Mammary epithelial cell (primary cell): ENCODE measurements at regions of chr18 and their contacts with region 1.

Region 1: DNA sequence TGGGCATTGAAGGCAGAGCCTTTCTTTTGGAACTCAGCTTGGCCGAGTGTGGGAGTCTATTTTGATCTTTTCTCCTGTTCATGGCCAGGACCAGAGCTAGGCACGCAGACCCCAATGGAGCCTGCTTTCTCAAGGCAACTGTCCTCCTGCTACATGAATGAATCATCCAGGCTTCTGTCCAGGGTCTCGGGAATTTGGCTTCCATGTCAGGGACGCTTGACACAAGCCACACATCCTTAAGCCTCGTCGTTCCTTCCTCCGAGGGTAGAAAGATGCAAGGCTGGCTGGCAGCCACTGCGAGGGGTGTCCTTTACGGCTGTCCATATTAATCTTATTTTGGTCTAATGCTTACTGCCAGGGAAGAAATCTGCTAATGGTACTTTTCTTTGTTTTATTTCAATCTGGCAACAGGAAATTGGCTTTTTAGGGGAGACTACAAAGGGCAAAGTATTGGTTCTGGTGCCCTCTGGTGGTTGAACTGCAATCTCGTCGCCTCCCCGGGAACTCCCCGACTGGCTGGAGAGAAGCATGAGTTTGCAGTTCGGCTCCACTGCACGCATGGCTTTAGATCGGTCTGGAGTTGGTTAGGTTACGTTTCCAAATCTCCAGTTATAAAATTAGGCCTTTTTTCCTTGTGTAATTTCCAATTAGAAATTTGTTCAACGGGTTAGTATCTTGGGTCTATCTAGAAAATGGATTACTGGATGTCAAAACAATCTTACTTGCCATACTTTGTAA is 135.2 kb downstream of the ALPK2 start:
- DNase-seq: peak; percentile 58
- H3K4me3 ChIP-seq: no peak overlapping the region
- H3K27ac ChIP-seq: no peak overlapping the region
- H3K4me1 ChIP-seq: peaks cover 8% of the 10 kb centered on the region
- H3K27me3 ChIP-seq: no peaks in the 10 kb centered on the region
- CTCF ChIP-seq: peak; percentile 79 to 91

Region 2: DNA sequence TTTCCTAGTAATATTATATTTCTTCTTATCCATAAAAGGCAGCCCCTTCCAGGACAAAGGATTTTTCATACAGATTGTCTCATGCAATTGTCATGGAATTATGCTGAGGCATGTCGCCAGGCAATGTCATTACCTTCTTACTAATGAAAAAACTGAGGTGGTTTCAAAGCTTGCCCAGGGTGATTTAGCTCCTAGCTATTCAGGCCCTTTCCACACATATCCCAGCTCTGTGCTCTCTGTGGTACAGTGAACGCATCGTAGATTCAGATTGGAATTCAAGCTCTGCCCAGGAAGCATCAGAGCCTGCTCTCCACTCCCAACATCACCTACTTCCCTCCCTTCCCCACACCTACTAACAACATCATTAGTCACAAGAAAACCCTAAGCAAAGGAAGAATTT is 750.7 kb before region 1 on chr18:
- CTCF ChIA-PET with region 1: no interaction called
- dilution Hi-C with region 1: no loop called
- in situ Hi-C with region 1: no loop called
- intact Hi-C with region 1: no loop called
- DNase-seq: peak; percentile 83
- H3K4me3 ChIP-seq: no peak overlapping the region
- H3K27ac ChIP-seq: peak overlapping the region; percentile 33
- H3K4me1 ChIP-seq: peaks cover 19% of the 10 kb centered on the region
- H3K27me3 ChIP-seq: no peaks in the 10 kb centered on the region
- CTCF ChIP-seq: no peak

Region 3: DNA sequence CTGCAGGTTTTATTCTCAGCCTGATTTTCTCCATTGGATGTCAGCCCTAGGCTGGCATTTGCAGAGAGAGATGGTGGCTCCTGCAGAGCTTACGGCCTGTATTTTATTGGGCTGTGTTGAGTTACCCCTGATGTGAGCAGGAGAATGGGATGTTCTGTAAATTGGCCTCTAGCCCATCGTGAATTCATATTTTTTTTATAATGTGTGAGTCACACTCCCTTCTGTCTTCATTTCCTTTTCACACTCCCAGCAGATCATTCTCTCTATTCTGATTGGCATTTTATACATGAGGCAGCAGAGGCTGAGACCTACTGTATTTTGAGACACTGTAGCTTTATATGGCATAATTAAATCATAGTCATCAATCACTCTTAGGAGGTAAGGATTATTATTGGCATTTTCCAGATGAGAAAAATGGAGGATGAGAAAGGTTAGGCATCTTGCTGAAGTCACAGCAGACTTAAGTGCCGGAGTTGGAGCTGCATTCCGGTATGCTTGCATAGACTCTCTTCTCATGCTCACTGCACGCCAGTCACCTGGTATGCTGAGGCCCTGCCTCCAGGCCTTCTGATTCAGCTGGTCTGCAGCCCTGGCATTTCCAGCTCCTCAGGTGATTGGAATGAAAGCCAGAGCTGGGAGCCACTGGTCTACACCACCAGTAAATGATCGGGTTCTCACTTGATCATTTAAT is 307.3 kb before region 1 on chr18:
- CTCF ChIA-PET with region 1: no interaction called
- dilution Hi-C with region 1: no loop called
- in situ Hi-C with region 1: no loop called
- intact Hi-C with region 1: loop called (anchors 5 kb)
- DNase-seq: peak; percentile 92
- H3K4me3 ChIP-seq: no peak overlapping the region
- H3K27ac ChIP-seq: peak overlapping the region; percentile 79
- H3K4me1 ChIP-seq: peaks cover 36% of the 10 kb centered on the region
- H3K27me3 ChIP-seq: no peaks in the 10 kb centered on the region
- CTCF ChIP-seq: no peak

Region 4: GRCh38 chr18:58402247-58402646 is 91.4 kb before region 1 on chr18:
- CTCF ChIA-PET with region 1: no interaction called
- dilution Hi-C with region 1: no loop called
- in situ Hi-C with region 1: loop called in 1 of 2 experiments (anchors 5 kb)
- intact Hi-C with region 1: loop called (anchors 1 kb)
- DNase-seq: peak; percentile 65
- H3K4me3 ChIP-seq: no peak overlapping the region
- H3K27ac ChIP-seq: no peak overlapping the region
- H3K4me1 ChIP-seq: peaks cover 8% of the 10 kb centered on the region
- H3K27me3 ChIP-seq: no peaks in the 10 kb centered on the region
- CTCF ChIP-seq: no peak

Region 5: DNA sequence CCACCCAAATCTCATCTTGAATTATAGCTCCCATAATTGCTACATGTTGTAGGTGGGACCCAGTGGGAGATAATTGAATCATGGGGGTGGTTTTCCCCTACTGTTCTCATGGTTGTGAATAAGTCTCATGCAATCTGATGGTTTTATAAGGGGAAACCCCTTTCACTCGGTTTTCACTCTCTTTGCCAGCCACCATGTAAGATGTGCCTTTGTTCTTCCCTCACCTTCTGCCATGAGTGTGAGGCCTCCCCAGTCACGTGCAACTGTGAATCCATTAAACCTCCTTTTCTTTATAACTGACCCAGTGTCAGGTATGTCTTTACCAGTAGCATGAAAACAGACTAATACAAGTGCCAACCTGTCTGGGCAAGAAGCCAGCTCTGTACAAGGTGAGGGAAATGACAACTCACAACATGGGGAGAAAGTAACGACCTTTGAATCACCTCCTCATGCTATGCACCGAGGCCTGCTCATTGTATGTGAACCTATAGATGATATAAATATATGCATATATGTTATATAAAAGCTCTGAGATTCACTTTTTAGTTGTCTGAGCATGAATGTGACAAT is 27.0 kb before region 1 on chr18:
- CTCF ChIA-PET with region 1: no interaction called
- dilution Hi-C with region 1: no loop called
- in situ Hi-C with region 1: no loop called
- intact Hi-C with region 1: no loop called
- DNase-seq: peak; percentile 80
- H3K4me3 ChIP-seq: no peak overlapping the region
- H3K27ac ChIP-seq: no peak overlapping the region
- H3K4me1 ChIP-seq: peaks cover 25% of the 10 kb centered on the region
- H3K27me3 ChIP-seq: no peaks in the 10 kb centered on the region
- CTCF ChIP-seq: no peak

Region 6: DNA sequence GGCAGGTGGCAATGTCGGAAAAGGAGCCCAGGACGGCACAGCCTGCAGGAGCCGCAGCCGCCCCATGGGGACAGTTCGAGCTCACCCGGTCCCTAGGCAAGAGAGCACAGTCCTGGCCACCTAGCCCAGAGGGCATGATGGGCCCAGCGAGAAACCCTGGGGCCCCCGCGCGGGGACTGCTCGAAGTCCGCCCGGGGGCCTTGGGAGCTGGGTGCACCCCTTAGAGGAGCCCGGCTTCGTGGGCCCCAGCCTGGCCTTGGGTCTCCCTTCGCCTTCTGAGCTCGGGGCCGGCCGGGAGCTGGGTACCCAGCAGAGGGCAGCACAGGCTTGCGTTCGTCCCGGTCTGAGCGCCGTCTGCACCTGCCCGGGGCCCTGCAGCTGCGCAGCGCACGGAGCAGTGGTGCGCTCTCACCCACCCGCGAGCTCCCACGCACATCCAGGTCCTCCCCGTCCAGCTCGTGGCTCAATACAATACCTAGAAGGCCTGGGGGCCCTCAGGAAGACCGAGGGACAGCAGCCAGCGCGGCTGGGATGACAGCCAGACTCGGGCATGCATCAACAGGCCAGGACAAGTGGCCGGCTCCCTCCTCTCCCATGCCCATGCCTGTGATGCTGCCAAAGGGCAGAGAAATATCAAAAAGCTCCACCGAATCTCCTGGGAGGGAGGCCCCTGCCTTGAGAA is 274.7 kb after region 1 on chr18:
- CTCF ChIA-PET with region 1: interaction called, 6 read pairs
- dilution Hi-C with region 1: no loop called
- in situ Hi-C with region 1: loop called in 1 of 2 experiments (anchors 10 kb)
- intact Hi-C with region 1: loop called (anchors 1 kb)
- DNase-seq: peak; percentile 84
- H3K4me3 ChIP-seq: peak overlapping the region in 1 of 3 experiments; percentile 28
- H3K27ac ChIP-seq: no peak overlapping the region
- H3K4me1 ChIP-seq: peaks cover 20% of the 10 kb centered on the region
- H3K27me3 ChIP-seq: no peaks in the 10 kb centered on the region
- CTCF ChIP-seq: peak; percentile 52 to 83